SK-N-SH (cell line): ENCODE measurements at regions of chr1 and their contacts with region 1.

Region 1: DNA sequence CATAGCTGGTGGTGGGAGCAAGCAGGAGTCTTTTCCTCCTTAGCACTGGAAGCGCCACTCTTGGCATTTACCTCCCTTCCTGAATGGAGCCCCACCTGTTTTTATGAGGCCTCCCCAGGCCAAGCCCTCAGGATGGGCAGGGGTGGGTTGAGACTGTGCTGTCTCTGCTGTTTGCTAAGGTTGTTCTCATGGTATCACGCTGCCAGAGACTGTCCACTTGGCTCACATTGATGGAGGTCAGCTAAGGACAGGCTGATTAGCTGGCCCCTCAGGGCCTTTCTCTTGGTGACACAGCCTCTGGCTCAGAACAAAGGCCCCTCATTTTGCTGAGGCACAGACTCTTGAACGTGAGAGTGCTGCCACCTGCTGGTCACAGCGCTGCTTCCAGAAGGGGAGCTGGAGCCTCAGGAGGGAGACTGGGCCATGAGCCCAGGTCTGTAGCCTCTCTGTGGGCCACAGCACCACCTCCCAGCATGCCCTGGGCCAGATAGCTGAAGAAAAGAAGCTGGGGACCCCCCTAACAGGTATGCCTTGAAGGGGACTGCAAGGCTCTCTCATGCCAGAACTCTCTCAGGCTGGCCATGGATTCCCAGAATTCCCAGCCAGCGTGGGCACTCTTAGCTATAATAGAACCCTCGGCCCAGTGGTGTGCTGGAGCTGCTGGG is 85.6 kb downstream of the CD58 start:
- DNase-seq: peak; percentile 85
- H3K4me3 ChIP-seq: peak overlapping the region in 1 of 2 experiments; percentile 33; a peak in 1 of 4 replicates
- H3K27ac ChIP-seq: peak overlapping the region in 1 of 2 experiments; percentile 58; a peak in 2 of 4 replicates
- H3K4me1 ChIP-seq: peaks cover 15 to 48% of the 10 kb centered on the region in 2 experiments; a peak in 3 of 4 replicates
- H3K27me3 ChIP-seq: no peaks in the 10 kb centered on the region
- CTCF ChIP-seq: peak; percentile 92
- EP300 ChIP-seq: no peak
- RAD21 ChIP-seq: peak; percentile 96

Region 2: GRCh38 chr1:116139592-116140134 is 345.5 kb before region 1 on chr1:
- CTCF ChIA-PET with region 1: interaction called, 1,099 read pairs
- POLR2A ChIA-PET with region 1: interaction called, 29 read pairs
- DNase-seq: no peak
- H3K4me3 ChIP-seq: no peak overlapping the region
- H3K27ac ChIP-seq: no peak overlapping the region
- H3K4me1 ChIP-seq: peaks cover 0 to 3% of the 10 kb centered on the region in 2 experiments; a peak in 1 of 4 replicates
- H3K27me3 ChIP-seq: no peaks in the 10 kb centered on the region
- CTCF ChIP-seq: no peak
- EP300 ChIP-seq: no peak
- RAD21 ChIP-seq: no peak

Region 3: GRCh38 chr1:116328657-116329056 is 156.5 kb before region 1 on chr1:
- CTCF ChIA-PET with region 1: no interaction called
- POLR2A ChIA-PET with region 1: no interaction called
- DNase-seq: no peak
- H3K4me3 ChIP-seq: no peak overlapping the region
- H3K27ac ChIP-seq: no peak overlapping the region
- H3K4me1 ChIP-seq: no peaks in the 10 kb centered on the region; a peak in 1 of 4 replicates
- H3K27me3 ChIP-seq: no peaks in the 10 kb centered on the region
- CTCF ChIP-seq: no peak
- EP300 ChIP-seq: no peak
- RAD21 ChIP-seq: no peak

Region 4: GRCh38 chr1:116345843-116346242 is 139.4 kb before region 1 on chr1:
- CTCF ChIA-PET with region 1: interaction called, 13 read pairs
- POLR2A ChIA-PET with region 1: no interaction called
- DNase-seq: peak; percentile 20
- H3K4me3 ChIP-seq: no peak overlapping the region
- H3K27ac ChIP-seq: peak overlapping the region in 1 of 2 experiments; percentile 34; a peak in 1 of 4 replicates
- H3K4me1 ChIP-seq: peaks cover 0 to 6% of the 10 kb centered on the region in 2 experiments; a peak in 2 of 4 replicates
- H3K27me3 ChIP-seq: no peaks in the 10 kb centered on the region; the same call in 1 of the 2 replicates
- CTCF ChIP-seq: no peak
- EP300 ChIP-seq: no peak
- RAD21 ChIP-seq: no peak

Region 5: DNA sequence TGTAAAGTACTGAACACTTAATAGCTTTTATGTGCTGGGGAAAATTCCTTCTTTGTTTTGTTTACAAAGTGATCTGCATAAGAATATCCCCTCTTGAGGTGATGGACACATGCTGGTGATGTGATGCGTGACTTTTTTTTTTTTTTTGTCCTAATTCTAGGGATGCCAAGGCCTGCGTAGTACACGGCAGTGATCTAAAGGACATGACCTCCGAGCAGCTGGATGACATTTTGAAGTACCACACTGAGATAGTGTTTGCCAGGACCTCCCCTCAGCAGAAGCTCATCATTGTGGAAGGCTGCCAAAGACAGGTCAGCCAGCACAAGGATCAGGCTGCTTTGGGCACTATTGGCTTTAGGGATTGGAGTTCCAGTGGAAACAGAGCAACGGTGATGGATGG is 87.5 kb before region 1 on chr1:
- CTCF ChIA-PET with region 1: interaction called, 14 read pairs
- POLR2A ChIA-PET with region 1: interaction called, 3 read pairs
- DNase-seq: no peak
- H3K4me3 ChIP-seq: no peak overlapping the region
- H3K27ac ChIP-seq: no peak overlapping the region
- H3K4me1 ChIP-seq: no peaks in the 10 kb centered on the region
- H3K27me3 ChIP-seq: no peaks in the 10 kb centered on the region
- CTCF ChIP-seq: no peak
- EP300 ChIP-seq: no peak
- RAD21 ChIP-seq: no peak

Region 6: GRCh38 chr1:116465845-116466685 is 19.1 kb before region 1 on chr1:
- CTCF ChIA-PET with region 1: interaction called, 68 read pairs
- POLR2A ChIA-PET with region 1: interaction called, 6 read pairs
- DNase-seq: no peak
- H3K4me3 ChIP-seq: no peak overlapping the region
- H3K27ac ChIP-seq: peak overlapping the region in 1 of 2 experiments; percentile 73; a peak in 2 of 4 replicates
- H3K4me1 ChIP-seq: peaks cover 0 to 12% of the 10 kb centered on the region in 2 experiments; a peak in 3 of 4 replicates
- H3K27me3 ChIP-seq: no peaks in the 10 kb centered on the region; the same call in 1 of the 2 replicates
- CTCF ChIP-seq: no peak
- EP300 ChIP-seq: no peak
- RAD21 ChIP-seq: no peak

Region 7: DNA sequence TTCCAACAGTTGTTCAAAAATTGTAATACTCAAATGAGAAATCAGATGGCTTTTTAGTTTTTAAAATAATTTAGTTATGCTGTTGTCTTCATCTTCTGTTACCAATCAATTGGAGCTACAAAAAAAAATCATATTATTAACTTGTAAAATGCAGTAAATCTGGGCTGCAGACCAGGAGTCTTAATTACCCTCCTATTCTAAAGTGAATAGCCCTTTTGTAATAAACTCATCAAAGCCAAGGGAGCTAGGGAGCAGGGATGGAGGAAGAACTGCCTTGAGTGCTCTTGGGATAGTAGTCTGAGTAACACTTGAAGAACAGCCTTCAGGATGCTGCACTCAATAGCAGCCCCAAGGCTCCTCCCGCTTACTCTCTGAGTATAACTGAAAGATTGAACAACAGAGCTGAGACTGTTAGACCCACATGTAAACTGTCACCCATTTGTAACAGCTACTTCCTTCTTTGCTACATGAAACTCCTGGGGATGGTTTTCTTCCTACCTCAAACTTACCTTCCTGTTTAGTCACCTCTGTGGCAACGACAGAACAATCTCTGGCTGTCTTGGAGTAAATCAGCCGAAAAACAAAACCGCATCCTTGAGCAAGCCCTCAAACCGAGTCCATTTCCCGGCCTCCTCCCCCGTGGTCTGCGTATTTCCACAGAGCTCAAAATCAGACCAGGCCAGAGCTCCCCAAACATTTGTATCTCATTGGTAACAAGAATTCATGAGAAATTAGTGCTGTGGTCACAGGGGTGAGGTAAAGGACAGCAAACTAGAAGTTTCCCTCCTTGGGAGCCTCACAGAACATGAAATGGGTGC is 29.7 kb after region 1 on chr1:
- CTCF ChIA-PET with region 1: interaction called, 12 read pairs
- POLR2A ChIA-PET with region 1: no interaction called
- DNase-seq: no peak
- H3K4me3 ChIP-seq: no peak overlapping the region
- H3K27ac ChIP-seq: peak overlapping the region in 1 of 2 experiments; percentile 91; a peak in 3 of 4 replicates
- H3K4me1 ChIP-seq: peaks cover 0 to 39% of the 10 kb centered on the region in 2 experiments; a peak in 2 of 4 replicates
- H3K27me3 ChIP-seq: no peaks in the 10 kb centered on the region
- CTCF ChIP-seq: no peak
- EP300 ChIP-seq: no peak
- RAD21 ChIP-seq: no peak